CD4-positive, alpha-beta memory T cell (primary cell): ENCODE measurements at regions of chr4 and their contacts with region 1.

Region 1: GRCh38 chr4:183098723-183099536 is at the start of gene WWC2:
- DNase-seq: peak; percentile 62 to 71 (median 62)
- H3K4me3 ChIP-seq: peak within 1 kb of the TSS; percentile 45 to 52
- H3K4me3 Mint-ChIP-seq: peak within 1 kb of the TSS; percentile 76 to 86 (median 78)
- H3K27ac ChIP-seq: no peak within 1 kb of the TSS
- H3K27ac Mint-ChIP-seq: peak within 1 kb of the TSS in 2 of 7 donors; percentile 19 to 50
- H3K4me1 ChIP-seq: peaks cover 14% of the 10 kb centered on the region
- H3K4me1 Mint-ChIP-seq: peaks cover 8 to 37% (median 21%) of the 10 kb centered on the region in 4 donors
- H3K27me3 ChIP-seq: peaks cover 3% of the 10 kb centered on the region
- H3K27me3 Mint-ChIP-seq: peaks cover 0 to 3% of the 10 kb centered on the region in 2 donors
- total RNA-seq, gene WWC2: 7.3 to 7.6 TPM

Region 2: DNA sequence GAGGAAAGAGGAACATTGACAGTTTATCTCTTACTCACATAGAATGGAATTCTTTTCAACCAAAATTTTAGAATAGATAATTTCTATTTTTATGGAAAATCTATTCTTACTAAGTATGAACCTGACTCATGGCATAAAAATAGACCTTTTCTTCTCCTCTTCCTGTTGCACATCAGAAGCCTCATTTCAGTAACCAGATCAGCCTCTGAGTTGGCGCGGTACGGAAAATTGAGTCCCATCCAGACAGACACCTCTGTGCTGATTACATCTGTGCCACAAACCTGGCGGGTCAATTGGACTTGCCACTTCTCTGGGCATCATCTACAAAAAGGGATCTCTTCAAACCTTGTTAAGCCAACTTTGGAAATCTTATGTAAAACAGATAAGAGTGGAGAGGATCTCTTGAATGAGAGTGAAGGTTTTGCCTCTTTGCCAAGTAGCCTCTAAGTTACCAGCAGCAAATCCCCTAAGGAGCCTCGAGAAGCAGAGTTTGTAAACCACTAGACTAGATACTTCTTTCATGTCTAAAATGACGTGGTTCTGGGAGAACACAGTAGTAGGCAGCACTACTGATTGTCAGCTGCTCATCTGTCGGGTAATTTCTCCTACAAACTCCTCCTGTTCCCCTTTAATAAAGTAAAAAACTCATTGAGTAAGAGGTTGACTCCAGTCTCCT is 818.4 kb before region 1 on chr4:
- CTCF ChIA-PET with region 1: no interaction called
- POLR2A ChIA-PET with region 1: no interaction called
- intact Hi-C with region 1: no loop called
- DNase-seq: no peak
- H3K4me3 ChIP-seq: no peak overlapping the region
- H3K4me3 Mint-ChIP-seq: no peak overlapping the region
- H3K27ac ChIP-seq: no peak overlapping the region
- H3K27ac Mint-ChIP-seq: no peak overlapping the region
- H3K4me1 ChIP-seq: no peaks in the 10 kb centered on the region
- H3K4me1 Mint-ChIP-seq: no peaks in the 10 kb centered on the region
- H3K27me3 ChIP-seq: no peaks in the 10 kb centered on the region
- H3K27me3 Mint-ChIP-seq: peaks cover 0 to 2% of the 10 kb centered on the region in 2 donors

Region 3: GRCh38 chr4:183182873-183183725 is 84.2 kb after region 1 on chr4:
- CTCF ChIA-PET with region 1: no interaction called
- POLR2A ChIA-PET with region 1: no interaction called
- intact Hi-C with region 1: loop called (anchors 5 kb)
- DNase-seq: peak; percentile 0 to 64 (median 7)
- H3K4me3 ChIP-seq: no peak overlapping the region
- H3K4me3 Mint-ChIP-seq: peak overlapping the region in 3 of 8 donors; percentile 9 to 45 (median 13)
- H3K27ac ChIP-seq: no peak overlapping the region
- H3K27ac Mint-ChIP-seq: no peak overlapping the region
- H3K4me1 ChIP-seq: no peaks in the 10 kb centered on the region
- H3K4me1 Mint-ChIP-seq: peaks cover 8 to 32% (median 11%) of the 10 kb centered on the region in 4 donors
- H3K27me3 ChIP-seq: no peaks in the 10 kb centered on the region
- H3K27me3 Mint-ChIP-seq: peaks cover 2 to 6% of the 10 kb centered on the region in 2 donors